CD4-positive, alpha-beta memory T cell (primary cell): ENCODE measurements at regions of chr9 and their contacts with region 1.

Region 1: DNA sequence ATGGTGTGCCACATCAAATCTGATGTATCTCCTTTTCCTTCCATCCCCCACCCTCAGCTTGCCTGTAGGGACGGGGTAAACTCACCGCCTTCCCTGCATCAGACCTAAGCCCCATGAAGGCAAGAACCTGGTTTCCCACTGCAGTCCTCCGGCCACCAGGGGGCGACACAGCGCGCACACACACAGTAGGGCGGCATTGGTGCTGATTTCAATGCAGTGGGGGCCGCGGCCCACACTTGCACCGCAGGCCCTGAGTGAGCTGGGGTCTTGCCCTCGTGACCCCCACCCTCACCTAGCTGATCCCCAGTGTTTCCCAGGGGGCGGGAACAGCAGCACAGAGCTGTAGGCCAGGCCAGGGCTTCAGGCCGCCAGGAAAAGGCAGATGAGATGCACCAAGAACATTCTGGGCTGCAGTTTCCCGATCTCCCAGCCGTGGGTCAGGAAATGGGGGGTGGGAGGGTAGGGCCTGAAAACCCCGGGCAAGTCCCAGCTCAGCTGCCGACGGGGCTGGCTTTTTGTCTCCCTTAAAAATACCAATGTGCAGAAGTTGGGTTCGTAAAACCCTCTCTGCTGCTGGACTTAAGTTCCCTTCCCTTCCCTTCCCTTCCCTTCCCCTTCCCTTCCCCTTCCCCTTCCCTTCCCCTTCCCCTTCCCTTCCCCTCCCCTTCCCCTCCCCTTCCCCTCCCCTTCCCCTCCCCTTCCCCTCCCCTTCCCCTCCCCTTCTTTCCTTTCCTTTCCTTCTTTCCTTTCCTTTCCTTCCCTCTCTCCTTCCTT is 19.5 kb downstream of the FAM163B start:
- DNase-seq: peak; percentile 20 to 45 (median 22)
- H3K4me3 ChIP-seq: no peak overlapping the region
- H3K4me3 Mint-ChIP-seq: no peak overlapping the region
- H3K27ac ChIP-seq: no peak overlapping the region
- H3K27ac Mint-ChIP-seq: no peak overlapping the region
- H3K4me1 ChIP-seq: no peaks in the 10 kb centered on the region
- H3K4me1 Mint-ChIP-seq: peaks cover 0 to 2% (median under 1%) of the 10 kb centered on the region in 4 donors
- H3K27me3 ChIP-seq: peaks cover 4% of the 10 kb centered on the region
- H3K27me3 Mint-ChIP-seq: peaks cover 2% of the 10 kb centered on the region in 2 donors

Region 2: GRCh38 chr9:133673258-133673655 is 83.6 kb after region 1 on chr9:
- CTCF ChIA-PET with region 1: no interaction called
- POLR2A ChIA-PET with region 1: no interaction called
- intact Hi-C with region 1: no loop called
- DNase-seq: no peak
- H3K4me3 ChIP-seq: no peak overlapping the region
- H3K4me3 Mint-ChIP-seq: no peak overlapping the region
- H3K27ac ChIP-seq: peak overlapping the region; percentile 1
- H3K27ac Mint-ChIP-seq: peak overlapping the region in 3 of 7 donors; percentile 29 to 38 (median 32)
- H3K4me1 ChIP-seq: peaks cover 29% of the 10 kb centered on the region
- H3K4me1 Mint-ChIP-seq: peaks cover 16 to 38% (median 29%) of the 10 kb centered on the region in 4 donors
- H3K27me3 ChIP-seq: no peaks in the 10 kb centered on the region
- H3K27me3 Mint-ChIP-seq: no peaks in the 10 kb centered on the region

Region 3: DNA sequence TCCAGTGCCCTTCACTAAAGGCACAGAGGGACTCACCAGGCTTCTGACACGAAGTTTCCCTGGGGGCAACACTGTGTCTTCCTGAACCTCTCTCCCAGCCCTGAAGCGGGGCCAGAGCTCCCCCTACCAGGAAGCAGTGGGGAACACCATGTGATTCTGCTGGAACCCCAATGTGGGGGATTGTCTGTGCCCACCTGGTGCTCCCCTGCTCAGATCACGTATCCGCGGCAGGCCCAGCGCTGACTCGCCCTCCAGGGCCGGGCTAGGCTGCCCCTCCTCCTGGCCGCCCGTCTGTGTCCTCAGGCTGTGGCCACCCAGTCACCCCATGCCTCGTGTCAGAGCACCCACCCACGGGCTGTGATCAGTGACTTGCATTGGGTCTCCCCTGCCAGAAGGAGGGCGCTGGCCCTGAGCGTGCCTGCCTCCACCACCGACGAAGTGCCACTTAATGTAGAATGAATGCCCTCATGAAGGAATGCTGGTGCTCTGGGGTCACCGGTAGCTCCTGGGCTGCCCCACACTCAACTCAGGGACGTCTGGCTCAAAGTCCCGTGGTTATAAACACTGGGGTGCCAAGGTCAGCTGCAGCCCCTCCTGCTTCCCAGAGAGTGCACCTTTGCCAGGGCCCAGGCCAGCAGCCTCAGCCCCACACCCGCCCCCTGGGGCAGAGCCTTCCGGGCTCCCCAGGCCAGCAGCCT is 126.4 kb after region 1 on chr9:
- CTCF ChIA-PET with region 1: interaction called, 4 read pairs
- POLR2A ChIA-PET with region 1: no interaction called
- intact Hi-C with region 1: loop called (anchors 2 kb)
- DNase-seq: peak in 2 of 5 donors; percentile 25 to 42
- H3K4me3 ChIP-seq: no peak overlapping the region
- H3K4me3 Mint-ChIP-seq: no peak overlapping the region
- H3K27ac ChIP-seq: no peak overlapping the region
- H3K27ac Mint-ChIP-seq: peak overlapping the region in 6 of 7 donors; percentile 12 to 64 (median 44)
- H3K4me1 ChIP-seq: no peaks in the 10 kb centered on the region
- H3K4me1 Mint-ChIP-seq: peaks cover 0 to 18% (median 2%) of the 10 kb centered on the region in 4 donors
- H3K27me3 ChIP-seq: no peaks in the 10 kb centered on the region
- H3K27me3 Mint-ChIP-seq: peaks cover 0 to 10% of the 10 kb centered on the region in 2 donors

Region 4: DNA sequence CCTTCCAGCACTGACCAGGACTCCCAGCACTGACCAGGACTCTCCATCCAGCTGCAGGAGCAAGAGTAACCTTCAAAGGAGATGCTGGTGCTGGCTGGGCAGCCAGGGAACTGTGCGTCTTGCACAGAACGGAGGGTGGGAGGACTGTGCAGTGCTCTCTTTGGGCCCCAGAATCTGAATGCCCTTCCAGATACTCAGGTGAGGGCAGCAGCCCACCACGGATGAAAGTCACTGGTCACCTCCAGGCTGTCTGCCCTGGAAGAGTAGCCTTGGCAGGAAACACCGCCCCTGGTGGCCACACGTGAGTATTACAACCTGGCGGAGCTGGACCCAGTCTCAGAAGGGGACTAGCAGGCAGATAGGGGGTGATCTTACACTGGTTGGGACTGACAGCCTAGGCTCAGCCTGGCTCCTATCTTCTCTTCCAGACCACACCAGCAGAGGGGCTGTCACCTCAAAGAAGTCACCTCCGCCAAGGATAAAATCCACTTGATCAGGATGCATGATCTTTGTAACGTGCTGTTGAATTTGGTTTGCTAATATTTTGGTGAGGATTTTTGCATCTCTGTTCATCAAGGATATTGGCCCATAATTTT is 153.3 kb after region 1 on chr9:
- CTCF ChIA-PET with region 1: interaction called, 10 read pairs
- POLR2A ChIA-PET with region 1: no interaction called
- intact Hi-C with region 1: no loop called
- DNase-seq: peak; percentile 51 to 67 (median 56)
- H3K4me3 ChIP-seq: no peak overlapping the region
- H3K4me3 Mint-ChIP-seq: no peak overlapping the region
- H3K27ac ChIP-seq: no peak overlapping the region
- H3K27ac Mint-ChIP-seq: no peak overlapping the region
- H3K4me1 ChIP-seq: peaks cover 14% of the 10 kb centered on the region
- H3K4me1 Mint-ChIP-seq: peaks cover 0 to 9% (median 4%) of the 10 kb centered on the region in 4 donors
- H3K27me3 ChIP-seq: no peaks in the 10 kb centered on the region
- H3K27me3 Mint-ChIP-seq: peaks cover 8 to 12% of the 10 kb centered on the region in 2 donors